A673 (cell line): ENCODE measurements at regions of chr2 and their contacts with region 1.

Region 1: DNA sequence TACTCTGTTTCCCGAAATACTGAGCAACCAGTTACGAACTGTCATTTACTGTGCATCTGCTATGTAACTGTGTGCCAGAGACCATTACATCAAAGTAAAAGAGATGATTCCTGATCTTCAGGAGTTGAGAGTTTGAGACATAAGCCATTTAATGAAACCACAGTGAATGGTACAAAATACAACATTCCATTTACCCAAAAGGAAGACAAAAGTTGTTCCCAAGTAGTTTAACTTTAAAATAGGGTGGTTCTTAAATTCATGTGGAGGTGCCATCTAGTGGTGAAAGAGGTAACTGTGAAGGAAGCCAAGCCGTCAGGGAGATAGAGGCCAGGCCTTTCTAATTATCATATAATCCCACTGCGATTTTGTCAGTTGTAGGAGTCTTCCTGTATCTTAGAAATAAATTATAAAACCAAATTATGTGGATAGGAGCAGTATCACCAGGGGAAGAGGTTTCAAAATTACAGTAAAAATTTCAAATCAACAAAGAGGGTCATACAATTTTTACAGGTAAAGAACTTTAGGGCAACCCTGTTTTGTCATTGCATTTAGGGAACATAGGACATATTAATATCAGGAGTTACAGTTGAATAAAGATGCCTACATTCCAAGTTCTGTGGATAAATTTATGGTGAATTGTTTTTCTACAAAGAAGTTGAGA is 67.7 kb downstream of the EPAS1 start:
- DNase-seq: peak; percentile 69
- H3K4me3 ChIP-seq: no peak overlapping the region
- H3K27ac ChIP-seq: no peak overlapping the region
- H3K4me1 ChIP-seq: no peaks in the 10 kb centered on the region
- H3K27me3 ChIP-seq: no peaks in the 10 kb centered on the region
- CTCF ChIP-seq: peak; percentile 88

Region 2: GRCh38 chr2:45643543-45644542 is 721.1 kb before region 1 on chr2:
- CTCF ChIA-PET with region 1: no interaction called
- POLR2A ChIA-PET with region 1: no interaction called
- intact Hi-C with region 1: loop called (anchors 5 kb)
- DNase-seq: peak; percentile 75
- H3K4me3 ChIP-seq: peak overlapping the region; percentile 55
- H3K27ac ChIP-seq: no peak overlapping the region
- H3K4me1 ChIP-seq: no peaks in the 10 kb centered on the region
- H3K27me3 ChIP-seq: peaks cover 22% of the 10 kb centered on the region
- CTCF ChIP-seq: peak; percentile 77

Region 3: GRCh38 chr2:45980161-45980852 is 384.6 kb before region 1 on chr2:
- CTCF ChIA-PET with region 1: no interaction called
- POLR2A ChIA-PET with region 1: no interaction called
- intact Hi-C with region 1: no loop called
- DNase-seq: no peak
- H3K4me3 ChIP-seq: no peak overlapping the region
- H3K27ac ChIP-seq: no peak overlapping the region
- H3K4me1 ChIP-seq: no peaks in the 10 kb centered on the region
- H3K27me3 ChIP-seq: no peaks in the 10 kb centered on the region
- CTCF ChIP-seq: no peak

Region 4: DNA sequence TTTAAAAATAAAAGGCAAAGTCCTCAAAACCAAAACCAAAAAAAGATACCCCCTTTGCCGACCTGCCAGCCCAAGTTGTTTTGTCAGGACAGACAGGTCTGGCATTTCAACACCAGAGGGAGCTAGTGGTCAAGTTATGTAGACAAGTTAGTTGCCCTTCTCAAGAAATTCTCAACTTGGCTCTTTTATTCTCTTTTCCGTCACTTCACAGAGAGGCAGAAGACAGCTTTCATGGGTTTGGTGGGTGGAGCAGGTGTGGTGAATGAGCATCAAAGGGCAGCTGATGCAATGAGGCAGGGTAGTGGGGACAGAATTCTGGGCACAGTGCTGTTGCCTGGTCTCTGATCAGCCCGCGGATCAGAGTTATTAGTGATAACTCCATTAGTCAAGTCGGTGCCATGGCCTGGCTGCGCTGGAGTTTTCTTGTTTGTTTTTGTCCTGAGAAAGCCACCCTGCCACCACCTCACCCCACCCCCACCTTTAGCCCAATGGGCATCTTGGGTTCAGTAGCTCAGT is 371.4 kb before region 1 on chr2:
- CTCF ChIA-PET with region 1: interaction called, 3 read pairs
- POLR2A ChIA-PET with region 1: no interaction called
- intact Hi-C with region 1: loop called (anchors 5 kb)
- DNase-seq: peak; percentile 73
- H3K4me3 ChIP-seq: no peak overlapping the region
- H3K27ac ChIP-seq: no peak overlapping the region
- H3K4me1 ChIP-seq: no peaks in the 10 kb centered on the region
- H3K27me3 ChIP-seq: no peaks in the 10 kb centered on the region
- CTCF ChIP-seq: peak; percentile 82

Region 5: GRCh38 chr2:46010925-46011490 is 353.9 kb before region 1 on chr2:
- CTCF ChIA-PET with region 1: interaction called, 3 read pairs
- POLR2A ChIA-PET with region 1: no interaction called
- intact Hi-C with region 1: loop called (anchors 2 kb)
- DNase-seq: peak; percentile 57
- H3K4me3 ChIP-seq: no peak overlapping the region
- H3K27ac ChIP-seq: no peak overlapping the region
- H3K4me1 ChIP-seq: peaks cover 12% of the 10 kb centered on the region
- H3K27me3 ChIP-seq: no peaks in the 10 kb centered on the region
- CTCF ChIP-seq: peak; percentile 73

Region 6: DNA sequence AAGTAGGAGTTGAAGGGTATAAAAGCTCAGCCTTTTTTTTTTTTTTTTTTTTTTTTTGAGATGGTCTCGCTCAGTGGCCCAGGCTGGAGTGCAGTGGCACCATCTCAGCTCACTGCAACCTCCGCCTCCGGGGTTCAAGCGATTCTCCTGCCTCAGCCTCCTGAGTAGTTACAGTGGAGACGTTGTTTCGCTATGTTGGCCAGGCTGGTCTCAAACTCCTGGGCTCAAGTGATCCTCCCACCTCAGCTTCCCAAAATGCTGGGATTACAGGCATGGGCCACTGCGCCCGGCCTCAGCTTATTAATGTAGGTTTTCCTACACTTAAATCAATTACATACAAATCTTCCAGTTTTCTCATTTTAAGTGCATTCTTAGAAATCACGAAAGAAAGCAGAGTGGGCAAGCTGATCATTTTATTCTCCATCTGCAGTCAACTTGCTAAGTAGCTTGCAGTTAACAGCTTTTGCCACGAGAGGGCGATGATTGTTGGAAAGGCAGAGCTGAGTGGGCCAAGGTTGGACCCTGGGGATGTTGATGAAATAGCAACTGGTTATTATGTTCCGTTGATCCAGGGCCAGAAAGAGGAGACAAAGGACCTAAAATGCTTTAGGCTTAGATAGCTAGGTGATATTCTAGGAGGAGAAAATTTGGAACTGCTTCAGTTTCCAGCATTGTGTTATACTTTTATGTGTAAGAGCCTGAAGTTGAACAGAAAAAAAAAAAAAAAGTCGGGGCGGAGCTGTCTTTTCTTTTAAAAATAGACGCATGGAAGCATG is 302.1 kb before region 1 on chr2:
- CTCF ChIA-PET with region 1: no interaction called
- POLR2A ChIA-PET with region 1: no interaction called
- intact Hi-C with region 1: loop called (anchors 2 kb)
- DNase-seq: peak; percentile 79
- H3K4me3 ChIP-seq: no peak overlapping the region
- H3K27ac ChIP-seq: no peak overlapping the region
- H3K4me1 ChIP-seq: no peaks in the 10 kb centered on the region
- H3K27me3 ChIP-seq: no peaks in the 10 kb centered on the region
- CTCF ChIP-seq: peak; percentile 86

Region 7: DNA sequence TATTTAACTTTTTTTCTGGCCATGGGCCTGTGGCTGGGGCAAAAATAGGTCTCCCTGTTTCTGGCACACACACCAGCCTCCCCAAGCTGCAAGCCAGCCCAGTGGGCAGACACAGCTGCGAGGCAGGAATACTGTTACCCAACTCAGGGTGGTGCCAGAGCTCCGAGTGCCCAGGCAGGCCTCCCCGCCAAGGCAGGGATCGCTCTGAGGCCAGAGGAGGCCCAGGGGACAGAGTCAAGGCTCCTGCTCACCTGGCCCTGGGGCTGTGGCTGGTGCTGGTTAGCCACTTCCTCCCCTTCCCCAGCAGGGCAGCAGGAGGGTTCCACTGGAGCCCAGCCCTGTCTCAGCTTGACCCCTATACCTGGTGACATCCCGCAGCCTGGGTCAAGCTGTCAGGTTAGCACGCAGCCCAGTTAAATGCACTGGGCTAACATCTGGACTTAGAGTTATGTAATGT is 134.8 kb before region 1 on chr2:
- CTCF ChIA-PET with region 1: no interaction called
- POLR2A ChIA-PET with region 1: no interaction called
- intact Hi-C with region 1: no loop called
- DNase-seq: no peak
- H3K4me3 ChIP-seq: no peak overlapping the region
- H3K27ac ChIP-seq: no peak overlapping the region
- H3K4me1 ChIP-seq: no peaks in the 10 kb centered on the region
- H3K27me3 ChIP-seq: peaks cover 7% of the 10 kb centered on the region
- CTCF ChIP-seq: no peak